ENCODE measurements at regions of chr10 and their contacts with region 1.

Region 1: GRCh38 chr10:101214446-101215396 is 14.5 kb downstream of the LBX1 start:
- DNase-seq: peak; percentile 63 to 75 (median 70)
- H3K4me3 ChIP-seq: peak overlapping the region in 1 of 2 donors; percentile 2
- H3K4me3 Mint-ChIP-seq: peak overlapping the region; percentile 37 to 86 (median 73)
- H3K27ac ChIP-seq: no peak overlapping the region
- H3K27ac Mint-ChIP-seq: peak overlapping the region in 3 of 7 donors; percentile 29 to 82 (median 39)
- H3K4me1 ChIP-seq: peaks cover 52% of the 10 kb centered on the region
- H3K4me1 Mint-ChIP-seq: peaks cover 16 to 49% (median 35%) of the 10 kb centered on the region in 4 donors
- H3K27me3 ChIP-seq: peaks cover 54% of the 10 kb centered on the region
- H3K27me3 Mint-ChIP-seq: peaks cover 39 to 64% of the 10 kb centered on the region in 2 donors

Region 2: GRCh38 chr10:101182936-101183335 is 31.8 kb before region 1 on chr10:
- CTCF ChIA-PET with region 1: interaction called, 10 read pairs
- POLR2A ChIA-PET with region 1: no interaction called
- intact Hi-C with region 1: no loop called
- DNase-seq: no peak
- H3K4me3 ChIP-seq: no peak overlapping the region
- H3K4me3 Mint-ChIP-seq: no peak overlapping the region
- H3K27ac ChIP-seq: no peak overlapping the region
- H3K27ac Mint-ChIP-seq: no peak overlapping the region
- H3K4me1 ChIP-seq: no peaks in the 10 kb centered on the region
- H3K4me1 Mint-ChIP-seq: no peaks in the 10 kb centered on the region
- H3K27me3 ChIP-seq: no peaks in the 10 kb centered on the region
- H3K27me3 Mint-ChIP-seq: peaks cover 18 to 24% of the 10 kb centered on the region in 2 donors

Region 3: GRCh38 chr10:101244321-101245050 is 29.8 kb after region 1 on chr10:
- CTCF ChIA-PET with region 1: interaction called, 45 read pairs
- POLR2A ChIA-PET with region 1: no interaction called
- intact Hi-C with region 1: no loop called
- DNase-seq: no peak
- H3K4me3 ChIP-seq: no peak overlapping the region
- H3K4me3 Mint-ChIP-seq: no peak overlapping the region
- H3K27ac ChIP-seq: no peak overlapping the region
- H3K27ac Mint-ChIP-seq: no peak overlapping the region
- H3K4me1 ChIP-seq: no peaks in the 10 kb centered on the region
- H3K4me1 Mint-ChIP-seq: no peaks in the 10 kb centered on the region
- H3K27me3 ChIP-seq: peaks cover 13% of the 10 kb centered on the region
- H3K27me3 Mint-ChIP-seq: peaks cover 37 to 52% of the 10 kb centered on the region in 2 donors

Region 4: DNA sequence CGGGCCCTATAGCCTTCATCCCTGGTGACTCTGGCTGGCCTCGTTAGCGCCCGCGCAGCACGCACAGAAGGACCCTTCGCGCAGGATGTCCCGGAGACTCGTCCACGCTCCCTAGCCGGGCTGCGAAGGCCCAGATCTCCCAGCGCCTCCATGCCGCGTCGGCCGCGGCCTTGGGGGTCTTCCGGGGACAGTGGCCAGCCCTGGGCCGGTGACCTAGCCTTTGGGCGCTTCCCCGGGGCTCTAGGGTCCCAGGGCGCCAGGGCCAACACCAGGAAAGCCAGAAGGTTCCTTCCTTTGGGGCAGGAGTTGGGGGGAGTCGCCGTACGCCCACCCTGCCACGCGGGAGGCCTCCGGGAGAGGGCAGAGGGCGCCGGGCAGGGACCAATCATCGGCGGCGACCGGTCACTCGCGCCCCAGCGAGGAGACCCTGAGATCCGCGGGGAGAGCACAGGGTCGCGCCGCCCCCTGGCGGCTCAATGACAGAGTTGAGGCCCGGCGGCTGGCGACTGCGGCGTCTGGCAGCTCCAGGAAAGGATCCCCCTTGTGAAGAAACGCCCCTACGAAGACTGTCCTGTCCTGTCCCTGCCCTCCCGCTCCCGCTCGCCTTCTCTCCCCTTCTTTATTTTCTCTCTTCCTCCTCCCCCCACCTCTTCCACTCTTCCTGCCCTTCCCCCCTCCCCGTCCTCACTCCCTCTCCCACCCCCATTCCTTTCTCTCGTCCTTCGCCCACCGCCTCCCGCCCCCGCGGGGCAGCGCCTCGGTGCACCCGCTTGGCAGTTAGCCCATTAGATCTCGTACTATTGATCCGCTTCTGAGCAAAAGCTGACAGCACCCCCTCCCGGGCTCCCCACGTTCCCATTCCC is 76.8 kb after region 1 on chr10:
- CTCF ChIA-PET with region 1: interaction called, 43 read pairs
- POLR2A ChIA-PET with region 1: interaction called, 3 read pairs
- intact Hi-C with region 1: loop called (anchors 1 kb)
- DNase-seq: peak in 4 of 5 donors; percentile 13 to 24 (median 19)
- H3K4me3 ChIP-seq: peak overlapping the region in 1 of 2 donors; percentile 38
- H3K4me3 Mint-ChIP-seq: peak overlapping the region; percentile 73 to 86 (median 82)
- H3K27ac ChIP-seq: no peak overlapping the region
- H3K27ac Mint-ChIP-seq: no peak overlapping the region
- H3K4me1 ChIP-seq: peaks cover 19% of the 10 kb centered on the region
- H3K4me1 Mint-ChIP-seq: peaks cover 0 to 19% (median 4%) of the 10 kb centered on the region in 4 donors
- H3K27me3 ChIP-seq: peaks cover 50% of the 10 kb centered on the region
- H3K27me3 Mint-ChIP-seq: peaks cover 52 to 57% of the 10 kb centered on the region in 2 donors

Region 5: GRCh38 chr10:101467286-101467770 is 252.6 kb after region 1 on chr10:
- CTCF ChIA-PET with region 1: interaction called, 84 read pairs
- POLR2A ChIA-PET with region 1: no interaction called
- intact Hi-C with region 1: loop called (anchors 1 kb)
- DNase-seq: peak; percentile 41 to 66 (median 56)
- H3K4me3 ChIP-seq: no peak overlapping the region
- H3K4me3 Mint-ChIP-seq: no peak overlapping the region
- H3K27ac ChIP-seq: no peak overlapping the region
- H3K27ac Mint-ChIP-seq: no peak overlapping the region
- H3K4me1 ChIP-seq: no peaks in the 10 kb centered on the region
- H3K4me1 Mint-ChIP-seq: peaks cover 0 to 9% (median 6%) of the 10 kb centered on the region in 4 donors
- H3K27me3 ChIP-seq: no peaks in the 10 kb centered on the region
- H3K27me3 Mint-ChIP-seq: no peaks in the 10 kb centered on the region

Region 6: GRCh38 chr10:101576211-101576863 is 361.6 kb after region 1 on chr10:
- CTCF ChIA-PET with region 1: interaction called, 52 read pairs
- POLR2A ChIA-PET with region 1: no interaction called
- intact Hi-C with region 1: no loop called
- DNase-seq: no peak
- H3K4me3 ChIP-seq: no peak overlapping the region
- H3K4me3 Mint-ChIP-seq: no peak overlapping the region
- H3K27ac ChIP-seq: no peak overlapping the region
- H3K27ac Mint-ChIP-seq: no peak overlapping the region
- H3K4me1 ChIP-seq: no peaks in the 10 kb centered on the region
- H3K4me1 Mint-ChIP-seq: no peaks in the 10 kb centered on the region
- H3K27me3 ChIP-seq: no peaks in the 10 kb centered on the region
- H3K27me3 Mint-ChIP-seq: no peaks in the 10 kb centered on the region

Measured in CD4-positive, alpha-beta memory T cell (primary cell).